Activated T-helper 2 cell treated with anti-CD3 and anti-CD28 coated beads, Interferon-gamma antibody, Interleukin-2, Interleukin-4, amounts not matched to agents 10 μg/mL and 5 μg/mL and 100 μg/mL, durations not matched to agents 14 hours and 24 hours and 36 hours (primary cell): ENCODE measurements at regions of chr17 and their contacts with region 1.

Region 1: DNA sequence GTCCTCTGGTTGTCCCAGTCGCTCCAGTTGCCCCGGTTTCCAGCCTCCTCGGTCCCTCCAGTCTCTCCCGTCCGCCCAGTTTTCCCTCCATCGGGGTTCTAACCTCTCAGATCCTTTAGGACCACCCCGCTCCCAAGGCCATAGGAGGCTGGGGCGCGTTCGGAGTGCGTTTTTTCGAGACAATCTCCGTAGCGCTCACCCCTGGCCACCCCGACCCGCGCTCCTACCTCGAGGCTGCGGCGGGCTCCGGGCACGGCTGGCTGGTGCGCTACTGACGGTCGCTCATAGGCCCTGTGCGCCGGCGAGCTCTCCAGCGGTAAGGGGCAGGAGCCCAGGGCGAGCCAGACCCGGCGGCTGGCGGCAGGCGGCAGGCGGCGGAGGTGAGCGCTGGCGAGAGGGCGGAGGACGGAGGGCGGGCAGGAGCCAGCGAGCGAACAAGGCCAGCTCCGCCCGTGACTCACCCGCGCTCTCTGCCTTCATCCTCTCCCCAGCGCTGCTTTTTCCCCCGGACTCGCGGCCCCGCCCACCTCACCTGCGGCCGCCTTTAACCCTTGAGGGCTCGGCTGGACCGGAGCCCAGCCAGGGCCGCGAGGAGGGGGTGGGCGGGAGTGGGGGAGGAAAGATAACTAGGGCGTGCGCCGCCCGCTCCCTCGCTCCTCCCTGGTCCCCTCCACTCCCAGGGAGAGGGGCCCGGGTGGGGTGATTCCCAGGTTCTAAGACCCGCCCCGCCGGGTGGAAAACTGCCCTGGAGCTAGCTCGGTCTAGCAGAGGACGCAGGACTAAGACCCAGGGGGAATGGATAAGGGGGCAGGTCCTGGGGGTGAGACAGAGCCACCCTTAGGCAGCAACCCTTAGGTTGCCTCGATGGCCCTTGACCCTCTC is at the start of gene SP6:
- DNase-seq: peak; percentile 42
- H3K4me3 Mint-ChIP-seq: peak within 1 kb of the TSS; percentile 19
- H3K27ac Mint-ChIP-seq: no peak within 1 kb of the TSS
- H3K4me1 Mint-ChIP-seq: peaks cover 21% of the 10 kb centered on the region
- H3K27me3 Mint-ChIP-seq: peaks cover 87% of the 10 kb centered on the region
- total RNA-seq, gene SP6: 0.09 and 0.14 TPM in 2 replicates

Region 2: DNA sequence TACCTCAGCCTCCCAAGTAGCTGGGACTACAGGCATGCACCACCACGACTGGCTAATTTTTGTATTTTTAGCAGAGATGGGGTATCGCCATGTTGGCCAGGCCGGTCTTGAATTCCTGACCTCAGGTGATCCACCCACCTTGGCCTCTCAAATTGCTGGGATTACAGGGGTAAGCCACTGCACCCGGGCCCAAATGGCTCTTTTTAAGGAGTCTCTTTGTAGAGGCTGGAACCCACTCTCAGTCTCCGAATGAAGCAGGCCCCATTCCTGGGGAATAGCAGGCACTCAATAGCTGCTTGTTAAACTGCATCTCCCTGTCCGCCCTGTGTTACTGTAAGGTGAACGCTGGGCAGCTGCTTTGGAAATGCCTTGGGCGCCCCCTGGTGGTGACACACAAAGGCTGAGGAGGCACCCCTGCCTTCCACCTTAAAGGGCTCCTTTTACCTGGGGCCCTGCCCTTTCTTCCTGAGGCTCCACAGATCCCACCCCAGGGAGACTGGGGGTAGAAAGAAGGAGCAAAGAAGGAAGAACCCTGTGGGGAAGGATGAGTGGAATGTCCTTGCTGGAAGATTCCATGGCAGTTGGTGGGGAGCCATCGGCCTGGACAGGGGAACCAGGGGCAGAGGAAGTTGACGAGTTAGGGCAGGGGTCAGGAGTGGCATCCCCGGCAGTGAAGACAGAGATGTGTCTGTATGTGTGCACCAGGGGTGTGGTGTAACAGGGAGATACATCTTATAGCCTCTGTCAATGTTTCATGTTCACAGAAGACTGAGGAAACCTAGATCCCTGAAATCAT is 39.0 kb after region 1 on chr17:
- intact Hi-C with region 1: loop called (anchors 2 kb)
- DNase-seq: peak; percentile 80
- H3K4me3 Mint-ChIP-seq: no peak overlapping the region
- H3K27ac Mint-ChIP-seq: no peak overlapping the region
- H3K4me1 Mint-ChIP-seq: peaks cover 13% of the 10 kb centered on the region
- H3K27me3 Mint-ChIP-seq: no peaks in the 10 kb centered on the region

Region 3: DNA sequence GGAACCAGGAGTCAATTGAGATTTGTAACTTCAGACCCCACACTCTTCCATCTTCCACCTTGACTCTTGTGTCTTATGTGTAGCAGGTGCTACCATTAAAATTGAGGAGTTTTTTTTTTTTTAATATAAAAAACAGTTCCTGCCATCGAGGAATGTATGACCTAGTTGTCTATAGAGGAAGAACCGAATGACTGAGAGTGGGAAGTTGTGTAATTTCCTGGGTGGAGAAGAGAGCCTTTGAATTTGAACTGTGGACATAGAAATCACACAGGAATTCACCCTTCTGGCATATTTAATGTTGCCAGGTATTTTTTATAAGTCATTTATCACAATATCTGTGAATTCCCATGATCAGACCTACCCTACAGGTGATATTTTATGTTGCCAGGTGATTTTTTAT is 67.1 kb after region 1 on chr17:
- intact Hi-C with region 1: no loop called
- DNase-seq: no peak
- H3K4me3 Mint-ChIP-seq: no peak overlapping the region
- H3K27ac Mint-ChIP-seq: no peak overlapping the region
- H3K4me1 Mint-ChIP-seq: no peaks in the 10 kb centered on the region
- H3K27me3 Mint-ChIP-seq: no peaks in the 10 kb centered on the region